ENCODE measurements at regions of chr17 and their contacts with region 1.

Region 1: GRCh38 chr17:59004338-59005111 is 102.2 kb downstream of the TRIM37 start:
- DNase-seq: peak; percentile 76
- H3K4me3 Mint-ChIP-seq: no peak overlapping the region
- H3K27ac Mint-ChIP-seq: peak overlapping the region; percentile 13
- H3K4me1 Mint-ChIP-seq: peaks cover 23% of the 10 kb centered on the region
- H3K27me3 Mint-ChIP-seq: no peaks in the 10 kb centered on the region

Region 2: GRCh38 chr17:58587702-58588254 is 416.7 kb before region 1 on chr17:
- CTCF ChIA-PET with region 1: interaction called, 31 read pairs
- POLR2A ChIA-PET with region 1: no interaction called
- intact Hi-C with region 1: loop called (anchors 1 kb)
- DNase-seq: peak; percentile 79
- H3K4me3 Mint-ChIP-seq: no peak overlapping the region
- H3K27ac Mint-ChIP-seq: no peak overlapping the region
- H3K4me1 Mint-ChIP-seq: no peaks in the 10 kb centered on the region
- H3K27me3 Mint-ChIP-seq: no peaks in the 10 kb centered on the region

Region 3: GRCh38 chr17:58658804-58659713 is 345.5 kb before region 1 on chr17:
- CTCF ChIA-PET with region 1: no interaction called
- POLR2A ChIA-PET with region 1: no interaction called
- intact Hi-C with region 1: loop called (anchors 1 kb)
- DNase-seq: peak; percentile 86
- H3K4me3 Mint-ChIP-seq: peak overlapping the region; percentile 77
- H3K27ac Mint-ChIP-seq: peak overlapping the region; percentile 97
- H3K4me1 Mint-ChIP-seq: peaks cover 18% of the 10 kb centered on the region
- H3K27me3 Mint-ChIP-seq: peaks cover 5% of the 10 kb centered on the region

Region 4: GRCh38 chr17:58703137-58703972 is 301.2 kb before region 1 on chr17:
- CTCF ChIA-PET with region 1: interaction called, 6 read pairs
- POLR2A ChIA-PET with region 1: interaction called, 3 read pairs
- intact Hi-C with region 1: loop called (anchors 1 kb)
- DNase-seq: peak; percentile 36
- H3K4me3 Mint-ChIP-seq: no peak overlapping the region
- H3K27ac Mint-ChIP-seq: peak overlapping the region; percentile 78
- H3K4me1 Mint-ChIP-seq: peaks cover 30% of the 10 kb centered on the region
- H3K27me3 Mint-ChIP-seq: no peaks in the 10 kb centered on the region

Region 5: GRCh38 chr17:58710936-58711775 is 293.4 kb before region 1 on chr17:
- CTCF ChIA-PET with region 1: interaction called, 44 read pairs
- POLR2A ChIA-PET with region 1: interaction called, 4 read pairs
- intact Hi-C with region 1: loop called (anchors 1 kb)
- DNase-seq: no peak
- H3K4me3 Mint-ChIP-seq: no peak overlapping the region
- H3K27ac Mint-ChIP-seq: no peak overlapping the region
- H3K4me1 Mint-ChIP-seq: peaks cover 8% of the 10 kb centered on the region
- H3K27me3 Mint-ChIP-seq: no peaks in the 10 kb centered on the region

Region 6: GRCh38 chr17:58755577-58756245 is 248.8 kb before region 1 on chr17 and contains the start of gene PPM1E:
- CTCF ChIA-PET with region 1: interaction called, 10 read pairs
- POLR2A ChIA-PET with region 1: no interaction called
- intact Hi-C with region 1: no loop called
- DNase-seq: peak; percentile 59
- H3K4me3 Mint-ChIP-seq: peak within 1 kb of the TSS; percentile 82
- H3K27ac Mint-ChIP-seq: no peak within 1 kb of the TSS
- H3K4me1 Mint-ChIP-seq: peaks cover 10% of the 10 kb centered on the region
- H3K27me3 Mint-ChIP-seq: peaks cover 44% of the 10 kb centered on the region
- total RNA-seq, gene PPM1E: 0.02 TPM in 1 of 2 experiments, not detected in the other

Region 7: DNA sequence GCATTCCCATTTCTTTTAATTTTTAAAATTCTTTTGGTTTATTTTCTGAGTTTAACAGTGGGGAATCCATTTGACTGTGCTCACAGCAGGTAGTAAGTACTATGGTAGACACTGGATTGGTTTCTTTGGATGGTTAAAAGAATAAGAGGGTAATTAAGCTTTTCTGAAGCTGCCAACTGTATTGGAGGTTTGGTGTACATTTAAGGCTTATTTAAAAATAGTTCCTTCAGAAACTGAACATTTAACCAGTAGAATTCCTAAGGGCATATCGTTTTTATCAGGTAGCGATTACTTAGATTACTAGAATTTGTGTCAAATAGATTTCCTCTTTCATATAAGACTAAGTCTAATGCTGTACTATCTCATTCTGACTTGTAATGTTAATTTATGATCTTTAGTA is 86.5 kb before region 1 on chr17:
- CTCF ChIA-PET with region 1: no interaction called
- POLR2A ChIA-PET with region 1: no interaction called
- intact Hi-C with region 1: no loop called
- DNase-seq: no peak
- H3K4me3 Mint-ChIP-seq: no peak overlapping the region
- H3K27ac Mint-ChIP-seq: no peak overlapping the region
- H3K4me1 Mint-ChIP-seq: peaks cover 10% of the 10 kb centered on the region
- H3K27me3 Mint-ChIP-seq: peaks cover 3% of the 10 kb centered on the region

Region 8: GRCh38 chr17:58960068-58960467 is 44.5 kb before region 1 on chr17:
- CTCF ChIA-PET with region 1: no interaction called
- POLR2A ChIA-PET with region 1: no interaction called
- intact Hi-C with region 1: loop called (anchors 5 kb)
- DNase-seq: no peak
- H3K4me3 Mint-ChIP-seq: no peak overlapping the region
- H3K27ac Mint-ChIP-seq: no peak overlapping the region
- H3K4me1 Mint-ChIP-seq: no peaks in the 10 kb centered on the region
- H3K27me3 Mint-ChIP-seq: no peaks in the 10 kb centered on the region